ENCODE measurements at regions of chr3 and their contacts with region 1.

Region 1: DNA sequence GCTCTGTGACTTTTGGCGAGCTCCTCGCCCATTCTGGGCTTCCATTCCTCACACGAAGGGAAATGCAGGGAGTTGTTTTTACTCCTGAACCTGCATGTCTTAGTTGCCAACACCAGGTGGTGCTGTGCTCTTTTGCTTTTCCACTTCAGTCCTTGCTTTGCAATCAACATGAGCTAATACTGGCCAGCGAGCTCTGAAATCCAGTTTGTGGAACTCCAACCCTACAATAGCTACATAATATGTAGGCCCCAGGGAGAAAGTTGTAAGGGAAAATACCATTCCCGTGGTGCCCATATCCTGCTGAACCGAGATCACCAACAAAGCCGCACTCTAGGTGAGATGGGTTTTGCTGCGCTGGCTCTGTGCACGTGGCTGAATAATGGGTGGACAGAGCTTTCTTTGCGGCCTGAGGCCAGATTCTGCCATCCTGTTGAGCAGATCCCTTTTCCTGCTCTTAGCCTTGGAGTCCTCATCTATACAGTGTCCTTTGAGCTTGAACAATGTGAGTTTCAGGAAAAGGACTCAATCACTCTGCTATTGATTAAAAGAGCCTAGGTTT is 25.0 kb downstream of the LSM3 start:
- DNase-seq: peak; percentile 77
- ATAC-seq: peak; percentile 77
- H3K4me3 ChIP-seq: no peak overlapping the region
- H3K27ac ChIP-seq: no peak overlapping the region
- H3K4me1 ChIP-seq: no peaks in the 10 kb centered on the region
- H3K27me3 ChIP-seq: no peaks in the 10 kb centered on the region
- CTCF ChIP-seq: peak; percentile 93

Region 2: GRCh38 chr3:14222900-14223594 is 19.4 kb after region 1 on chr3:
- CTCF ChIA-PET with region 1: interaction called, 14 read pairs
- POLR2A ChIA-PET with region 1: no interaction called
- intact Hi-C with region 1: loop called (anchors 2 kb)
- DNase-seq: peak; percentile 53
- ATAC-seq: no peak
- H3K4me3 ChIP-seq: no peak overlapping the region
- H3K27ac ChIP-seq: peak overlapping the region; percentile 56
- H3K4me1 ChIP-seq: peaks cover 54% of the 10 kb centered on the region
- H3K27me3 ChIP-seq: no peaks in the 10 kb centered on the region
- CTCF ChIP-seq: peak; percentile 15; the same call in 1 of the 2 replicates

Region 3: DNA sequence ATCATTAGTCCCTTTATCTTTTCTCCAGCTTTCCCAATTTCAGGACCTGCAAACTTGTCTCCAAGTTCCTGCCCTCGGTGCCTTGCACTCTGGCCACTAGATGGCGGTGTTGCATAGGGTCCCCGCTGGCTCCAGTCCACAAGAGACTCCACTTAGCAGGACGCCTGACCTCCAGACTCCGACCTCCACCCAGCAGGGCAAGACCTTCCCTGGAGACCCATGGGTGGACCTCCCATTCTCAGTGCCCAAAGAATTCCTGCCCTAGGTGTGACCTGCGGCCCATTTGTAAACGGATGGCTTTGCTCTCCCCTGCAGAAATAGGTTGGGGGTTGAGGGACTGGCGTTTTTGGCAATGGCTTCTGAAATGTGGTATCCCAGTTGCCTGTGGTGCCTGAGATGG is 57.6 kb after region 1 on chr3:
- CTCF ChIA-PET with region 1: interaction called, 15 read pairs
- POLR2A ChIA-PET with region 1: no interaction called
- intact Hi-C with region 1: loop called (anchors 1 kb)
- DNase-seq: peak; percentile 85
- ATAC-seq: peak; percentile 53
- H3K4me3 ChIP-seq: no peak overlapping the region
- H3K27ac ChIP-seq: no peak overlapping the region
- H3K4me1 ChIP-seq: peaks cover 9% of the 10 kb centered on the region
- H3K27me3 ChIP-seq: no peaks in the 10 kb centered on the region
- CTCF ChIP-seq: peak; percentile 98

Region 4: GRCh38 chr3:14461748-14462324 is 258.2 kb after region 1 on chr3:
- CTCF ChIA-PET with region 1: interaction called, 20 read pairs
- POLR2A ChIA-PET with region 1: no interaction called
- intact Hi-C with region 1: no loop called
- DNase-seq: peak; percentile 74
- ATAC-seq: peak; percentile 73
- H3K4me3 ChIP-seq: no peak overlapping the region
- H3K27ac ChIP-seq: no peak overlapping the region
- H3K4me1 ChIP-seq: peaks cover 12% of the 10 kb centered on the region
- H3K27me3 ChIP-seq: no peaks in the 10 kb centered on the region
- CTCF ChIP-seq: peak; percentile 97

Region 5: GRCh38 chr3:14780927-14781507 is 577.4 kb after region 1 on chr3:
- CTCF ChIA-PET with region 1: interaction called, 6 read pairs
- POLR2A ChIA-PET with region 1: no interaction called
- intact Hi-C with region 1: loop called (anchors 5 kb)
- DNase-seq: peak; percentile 74
- ATAC-seq: peak; percentile 99
- H3K4me3 ChIP-seq: no peak overlapping the region
- H3K27ac ChIP-seq: no peak overlapping the region
- H3K4me1 ChIP-seq: no peaks in the 10 kb centered on the region
- H3K27me3 ChIP-seq: no peaks in the 10 kb centered on the region
- CTCF ChIP-seq: peak; percentile 95

Measured in PC-3 (cell line).